HEK293 (cell line): ENCODE measurements at regions of chr12 and their contacts with region 1.

Region 1: DNA sequence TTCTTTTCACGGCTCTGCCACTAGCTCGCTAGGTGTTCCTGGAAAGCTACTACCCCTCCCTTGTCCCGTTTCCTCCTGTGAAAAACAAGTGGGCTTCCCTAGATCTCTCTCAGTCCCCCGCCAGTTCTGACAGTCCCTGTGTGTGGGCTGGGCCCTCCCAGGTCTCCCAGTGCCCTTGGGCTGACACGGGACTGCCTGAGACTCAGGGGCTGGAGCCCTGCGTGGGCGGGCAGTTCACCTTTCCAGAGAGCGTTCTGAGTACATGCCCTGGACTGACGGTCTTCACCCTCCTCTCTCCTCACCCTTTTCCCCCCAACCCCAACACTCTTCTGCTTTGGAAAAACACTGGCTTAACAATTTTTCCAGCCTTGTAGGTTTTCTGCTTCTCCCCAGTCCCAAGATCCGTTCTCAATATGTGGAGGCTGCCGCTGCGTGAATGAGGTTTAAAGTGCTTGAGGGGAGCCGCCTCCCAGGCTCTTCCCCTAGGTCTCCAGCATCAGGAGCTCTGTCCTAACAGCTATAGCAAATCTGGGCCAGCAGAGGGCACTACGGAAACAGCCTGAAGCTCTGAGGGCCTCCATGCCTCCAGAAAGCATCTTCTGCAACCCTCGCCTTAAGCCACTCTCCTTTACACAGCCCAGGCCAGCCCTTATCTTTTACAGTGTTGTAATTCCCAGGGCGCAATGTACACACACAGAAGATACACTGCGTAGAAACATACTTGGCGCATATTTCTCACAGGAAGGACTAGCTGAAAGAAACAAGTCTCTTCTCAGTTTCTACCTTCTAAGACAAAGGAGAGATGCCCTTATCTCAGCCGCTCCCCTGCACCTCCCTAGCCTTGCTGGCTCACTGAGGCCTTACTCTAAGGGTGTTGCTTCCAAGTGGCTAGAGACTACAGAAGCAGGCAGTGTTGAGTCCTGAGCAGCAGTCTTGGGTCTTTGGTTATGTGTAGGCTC is 10.4 kb upstream of the DCD start:
- H3K4me3 ChIP-seq: no peak overlapping the region
- H3K27ac ChIP-seq: no peak overlapping the region
- H3K4me1 ChIP-seq: peaks cover 5% of the 10 kb centered on the region; the same call in 1 of the 2 replicates
- CTCF ChIP-seq: no peak

Region 2: GRCh38 chr12:54596526-54596946 is 62.0 kb before region 1 on chr12:
- CTCF ChIA-PET with region 1: interaction called, 18 read pairs
- POLR2A ChIA-PET with region 1: no interaction called
- H3K4me3 ChIP-seq: no peak overlapping the region
- H3K27ac ChIP-seq: no peak overlapping the region
- H3K4me1 ChIP-seq: no peaks in the 10 kb centered on the region
- CTCF ChIP-seq: peak; percentile 49; the same call in 1 of the 2 replicates

Region 3: GRCh38 chr12:54603173-54603814 is 55.3 kb before region 1 on chr12:
- CTCF ChIA-PET with region 1: interaction called, 12 read pairs
- POLR2A ChIA-PET with region 1: no interaction called
- H3K4me3 ChIP-seq: no peak overlapping the region
- H3K27ac ChIP-seq: no peak overlapping the region
- H3K4me1 ChIP-seq: no peaks in the 10 kb centered on the region
- CTCF ChIP-seq: peak; percentile 73

Region 4: DNA sequence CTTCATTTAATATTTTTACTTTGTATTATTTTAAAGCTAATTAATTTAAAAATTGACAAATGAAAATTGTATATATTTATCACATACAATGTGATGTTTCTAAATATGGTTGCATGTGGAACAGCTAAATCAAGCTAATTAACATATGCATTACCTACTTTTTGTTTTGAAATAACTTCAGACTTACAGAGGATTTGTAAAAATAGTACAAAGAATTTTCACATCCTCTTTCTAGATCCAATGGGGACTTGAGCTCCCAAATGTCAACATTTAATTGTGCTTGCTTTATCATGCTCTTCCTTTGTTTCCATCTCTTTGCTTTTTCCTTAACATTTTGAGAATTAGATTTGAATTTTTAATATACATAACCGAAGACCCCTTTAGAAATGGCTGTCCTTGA is 17.0 kb before region 1 on chr12:
- CTCF ChIA-PET with region 1: interaction called, 12 read pairs
- POLR2A ChIA-PET with region 1: no interaction called
- H3K4me3 ChIP-seq: no peak overlapping the region
- H3K27ac ChIP-seq: no peak overlapping the region
- H3K4me1 ChIP-seq: no peaks in the 10 kb centered on the region
- CTCF ChIP-seq: no peak

Region 5: DNA sequence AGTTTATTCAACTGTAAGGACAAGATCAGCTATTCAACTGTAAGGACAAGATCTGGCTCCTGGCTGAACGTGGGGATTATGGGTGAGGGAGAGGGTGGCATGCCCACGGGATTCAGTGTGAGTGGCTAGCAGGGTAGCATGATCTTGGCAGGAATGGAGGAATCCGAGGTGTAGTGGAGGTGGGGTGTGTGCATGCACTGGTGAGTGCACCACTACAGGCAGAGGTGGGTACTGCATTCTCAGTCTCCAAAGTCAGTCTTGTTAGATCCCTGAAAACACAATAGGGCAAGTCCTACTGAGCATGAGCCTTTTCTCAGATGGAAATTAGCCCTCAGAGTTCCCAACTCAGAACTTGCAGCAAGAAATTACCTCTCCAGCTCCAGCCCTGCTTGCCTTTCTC is 21.8 kb after region 1 on chr12:
- CTCF ChIA-PET with region 1: interaction called, 10 read pairs
- POLR2A ChIA-PET with region 1: no interaction called
- H3K4me3 ChIP-seq: no peak overlapping the region
- H3K27ac ChIP-seq: no peak overlapping the region
- H3K4me1 ChIP-seq: no peaks in the 10 kb centered on the region; the same call in 1 of the 2 replicates
- CTCF ChIP-seq: 0 out of 2 replicates have a peak, but pooled peaks have one; percentile 29

Region 6: GRCh38 chr12:54689984-54690383 is 31.4 kb after region 1 on chr12:
- CTCF ChIA-PET with region 1: interaction called, 11 read pairs
- POLR2A ChIA-PET with region 1: no interaction called
- H3K4me3 ChIP-seq: no peak overlapping the region
- H3K27ac ChIP-seq: no peak overlapping the region
- H3K4me1 ChIP-seq: no peaks in the 10 kb centered on the region
- CTCF ChIP-seq: peak; percentile 32; the same call in 1 of the 2 replicates

Region 7: DNA sequence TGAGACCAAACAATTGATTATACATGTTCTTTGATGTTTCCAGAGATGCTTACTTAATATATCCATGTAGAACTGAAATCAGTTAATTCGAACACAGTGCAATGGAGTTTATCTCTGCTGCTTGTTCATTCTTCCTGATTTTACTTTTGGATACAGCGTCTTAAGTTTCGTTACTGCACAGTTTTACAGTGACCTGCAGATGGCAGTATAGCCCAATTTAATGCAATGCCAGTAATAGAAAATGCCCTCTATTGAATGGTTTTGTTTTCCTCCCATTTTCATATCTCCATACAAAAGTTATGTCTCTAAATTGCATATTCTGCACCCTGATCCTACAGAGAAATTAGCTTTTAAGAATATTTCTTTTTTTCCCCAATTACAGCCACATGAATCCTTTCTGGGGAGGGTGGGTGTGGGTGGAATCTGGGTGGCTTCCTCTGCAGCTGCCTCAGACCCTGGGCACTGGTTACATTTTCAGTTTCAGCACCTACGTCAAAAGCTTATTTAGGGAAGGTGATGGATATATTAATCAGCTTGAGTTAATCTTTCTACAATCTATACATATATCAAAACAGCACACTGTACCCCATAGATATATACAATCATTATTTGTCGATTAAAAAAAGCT is 90.7 kb after region 1 on chr12:
- CTCF ChIA-PET with region 1: interaction called, 12 read pairs
- POLR2A ChIA-PET with region 1: no interaction called
- H3K4me3 ChIP-seq: no peak overlapping the region
- H3K27ac ChIP-seq: no peak overlapping the region
- H3K4me1 ChIP-seq: no peaks in the 10 kb centered on the region
- CTCF ChIP-seq: peak; percentile 45; the same call in 1 of the 2 replicates